Activated CD4-positive, alpha-beta T cell treated with anti-CD3 and anti-CD28 coated beads, Interleukin-2, amount 10 ng/mL, durations not matched to agents 7 days and 5 days (primary cell): ENCODE measurements at regions of chr7 and their contacts with region 1.

Region 1: DNA sequence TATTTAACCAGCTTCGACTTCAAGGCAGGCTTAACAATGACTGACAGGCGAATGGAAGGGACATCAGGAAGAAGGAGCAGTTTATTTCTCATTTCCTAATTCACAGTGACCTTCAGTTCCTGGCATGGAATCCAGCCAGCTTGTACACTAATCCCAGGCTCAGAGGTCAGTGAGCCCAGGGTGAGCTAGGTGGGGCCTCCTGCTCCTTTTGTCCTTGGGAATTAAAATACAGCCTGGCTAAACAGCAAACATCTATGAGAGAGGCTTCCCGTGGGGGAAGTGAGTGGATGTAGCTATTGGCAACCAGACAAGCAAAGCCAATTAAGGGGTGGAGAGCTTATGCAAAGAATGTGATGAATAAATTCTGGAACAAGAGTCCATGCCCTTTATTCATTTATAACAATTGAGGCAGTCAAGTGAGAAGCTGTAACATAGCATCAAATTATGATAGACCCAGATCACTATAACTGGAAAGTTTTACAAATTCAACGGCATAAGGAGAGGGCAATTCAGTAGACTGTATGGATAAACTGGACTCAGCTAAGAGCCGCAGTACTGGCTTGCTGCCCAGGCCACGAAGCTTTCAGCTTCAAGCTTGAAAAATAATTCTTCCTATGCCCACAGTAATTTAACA is 57.1 kb downstream of the STK17A start:
- DNase-seq: no peak
- H3K4me3 Mint-ChIP-seq: no peak overlapping the region
- H3K27ac Mint-ChIP-seq: peak overlapping the region; percentile 39
- H3K4me1 Mint-ChIP-seq: peaks cover 82% of the 10 kb centered on the region
- H3K27me3 Mint-ChIP-seq: no peaks in the 10 kb centered on the region

Region 2: DNA sequence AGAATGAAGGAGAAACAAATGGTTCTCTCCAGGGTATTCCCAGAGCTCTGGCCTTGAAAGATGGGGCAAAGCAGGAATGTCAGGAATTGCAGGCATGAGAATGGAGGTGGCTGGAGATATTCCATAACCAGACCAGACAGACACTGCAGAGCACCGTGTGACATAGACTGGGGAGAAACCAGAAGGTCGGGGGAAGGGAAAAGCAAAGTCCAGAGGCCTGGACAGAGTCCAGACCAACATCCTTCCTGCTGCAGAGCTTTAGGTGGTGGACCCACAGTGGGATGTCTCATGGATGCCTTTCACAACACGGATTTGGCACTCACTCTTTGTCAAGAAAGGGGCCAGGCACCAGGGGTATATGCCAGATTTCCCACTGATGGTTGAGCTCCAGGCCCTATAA is 1759.9 kb before region 1 on chr7:
- CTCF ChIA-PET with region 1: no interaction called
- POLR2A ChIA-PET with region 1: interaction called, 12 read pairs
- DNase-seq: no peak
- H3K4me3 Mint-ChIP-seq: no peak overlapping the region
- H3K27ac Mint-ChIP-seq: peak overlapping the region; percentile 74
- H3K4me1 Mint-ChIP-seq: peaks cover 35% of the 10 kb centered on the region
- H3K27me3 Mint-ChIP-seq: peaks cover 3% of the 10 kb centered on the region

Region 3: DNA sequence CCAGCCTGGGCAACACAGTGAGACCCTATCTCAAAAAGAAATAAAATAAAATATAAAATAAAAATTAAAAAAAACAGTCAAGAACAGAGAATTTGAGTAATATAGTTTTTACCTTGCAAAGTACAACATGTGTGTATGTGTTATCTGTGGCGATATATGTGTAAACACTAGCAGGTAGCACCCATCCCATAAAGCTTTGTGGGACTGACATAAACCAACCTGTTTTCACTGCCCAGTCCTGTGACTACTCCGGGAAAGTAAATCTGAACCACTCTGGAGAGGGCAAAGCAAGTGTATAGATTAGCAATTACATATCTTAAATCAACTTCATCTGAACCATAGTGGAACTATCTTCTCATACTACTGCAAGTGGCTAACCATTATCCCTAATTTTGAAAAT is 17.0 kb after region 1 on chr7:
- CTCF ChIA-PET with region 1: no interaction called
- POLR2A ChIA-PET with region 1: no interaction called
- DNase-seq: no peak
- H3K4me3 Mint-ChIP-seq: no peak overlapping the region
- H3K27ac Mint-ChIP-seq: no peak overlapping the region
- H3K4me1 Mint-ChIP-seq: peaks cover 73% of the 10 kb centered on the region
- H3K27me3 Mint-ChIP-seq: no peaks in the 10 kb centered on the region